ENCODE measurements at regions of chr1 and their contacts with region 1.

Region 1: GRCh38 chr1:153510984-153511410 is 24.8 kb downstream of the S100A6 start:
- DNase-seq: peak; percentile 42
- H3K4me3 ChIP-seq: no peak overlapping the region
- H3K27ac ChIP-seq: no peak overlapping the region
- H3K27me3 ChIP-seq: no peaks in the 10 kb centered on the region
- CTCF ChIP-seq: peak; percentile 98

Region 2: GRCh38 chr1:153494976-153495535 is 15.9 kb before region 1 on chr1:
- CTCF ChIA-PET with region 1: interaction called, 19 read pairs
- POLR2A ChIA-PET with region 1: interaction called, 5 read pairs
- DNase-seq: peak; percentile 29
- H3K4me3 ChIP-seq: no peak overlapping the region
- H3K27ac ChIP-seq: no peak overlapping the region
- H3K27me3 ChIP-seq: peaks cover 10% of the 10 kb centered on the region
- CTCF ChIP-seq: peak; percentile 98

Region 3: GRCh38 chr1:153545067-153546055 is 34.4 kb after region 1 on chr1 and contains the start of gene S100A4:
- CTCF ChIA-PET with region 1: interaction called, 10 read pairs
- POLR2A ChIA-PET with region 1: no interaction called
- DNase-seq: peak; percentile 71
- H3K4me3 ChIP-seq: peak within 1 kb of the TSS; percentile 31; the same call in 1 of the 2 replicates
- H3K27ac ChIP-seq: peak within 1 kb of the TSS; percentile 80
- H3K27me3 ChIP-seq: no peaks in the 10 kb centered on the region
- CTCF ChIP-seq: no peak
- polyA plus RNA-seq, gene S100A4: 20.0 and 20.7 TPM in 2 replicates

Region 4: DNA sequence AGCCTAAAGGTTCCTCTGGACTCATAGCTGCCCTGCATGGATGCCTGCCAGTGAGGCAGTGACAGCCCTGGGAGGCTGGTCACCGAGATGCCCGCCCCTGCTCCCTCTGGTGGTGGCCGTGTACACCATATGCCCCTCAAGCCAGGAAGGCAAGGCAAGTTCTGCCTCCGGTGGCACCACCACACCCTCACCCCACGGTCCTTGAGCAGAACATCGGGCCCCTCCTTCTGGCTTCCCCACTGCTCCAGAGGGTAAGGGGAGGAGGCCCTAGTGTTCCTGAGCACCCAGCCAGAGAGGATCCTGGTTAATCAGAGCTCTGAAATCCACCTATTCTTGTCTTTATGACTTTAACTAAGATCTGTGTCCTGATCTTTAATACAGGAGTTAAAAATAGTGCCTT is 106.7 kb after region 1 on chr1:
- CTCF ChIA-PET with region 1: interaction called, 29 read pairs
- POLR2A ChIA-PET with region 1: interaction called, 3 read pairs
- DNase-seq: no peak
- H3K4me3 ChIP-seq: no peak overlapping the region
- H3K27ac ChIP-seq: no peak overlapping the region
- H3K27me3 ChIP-seq: no peaks in the 10 kb centered on the region
- CTCF ChIP-seq: peak; percentile 61

Region 5: DNA sequence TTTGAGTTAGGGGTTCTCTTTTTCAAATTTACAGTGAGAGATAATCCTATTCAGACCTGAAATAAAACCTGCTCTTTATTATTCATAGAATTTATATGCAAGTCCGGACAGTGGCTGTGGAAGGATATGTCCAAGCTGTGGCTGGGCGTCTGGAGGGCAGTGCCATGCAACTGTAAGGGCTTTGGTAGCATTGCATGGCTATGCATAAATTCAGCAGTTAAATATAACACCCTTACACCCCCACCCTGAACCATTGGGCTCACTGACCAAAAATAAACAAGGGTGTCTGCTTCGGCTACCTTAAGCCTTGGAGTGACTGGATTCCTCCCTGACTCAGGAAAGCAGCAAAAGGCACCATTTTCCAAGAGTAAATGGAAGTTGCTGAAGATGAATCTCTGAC is 128.3 kb after region 1 on chr1:
- CTCF ChIA-PET with region 1: interaction called, 15 read pairs
- POLR2A ChIA-PET with region 1: interaction called, 14 read pairs
- DNase-seq: no peak
- H3K4me3 ChIP-seq: no peak overlapping the region
- H3K27ac ChIP-seq: no peak overlapping the region
- H3K27me3 ChIP-seq: no peaks in the 10 kb centered on the region
- CTCF ChIP-seq: no peak